ENCODE measurements at regions of chr9 and their contacts with region 1.

Region 1: DNA sequence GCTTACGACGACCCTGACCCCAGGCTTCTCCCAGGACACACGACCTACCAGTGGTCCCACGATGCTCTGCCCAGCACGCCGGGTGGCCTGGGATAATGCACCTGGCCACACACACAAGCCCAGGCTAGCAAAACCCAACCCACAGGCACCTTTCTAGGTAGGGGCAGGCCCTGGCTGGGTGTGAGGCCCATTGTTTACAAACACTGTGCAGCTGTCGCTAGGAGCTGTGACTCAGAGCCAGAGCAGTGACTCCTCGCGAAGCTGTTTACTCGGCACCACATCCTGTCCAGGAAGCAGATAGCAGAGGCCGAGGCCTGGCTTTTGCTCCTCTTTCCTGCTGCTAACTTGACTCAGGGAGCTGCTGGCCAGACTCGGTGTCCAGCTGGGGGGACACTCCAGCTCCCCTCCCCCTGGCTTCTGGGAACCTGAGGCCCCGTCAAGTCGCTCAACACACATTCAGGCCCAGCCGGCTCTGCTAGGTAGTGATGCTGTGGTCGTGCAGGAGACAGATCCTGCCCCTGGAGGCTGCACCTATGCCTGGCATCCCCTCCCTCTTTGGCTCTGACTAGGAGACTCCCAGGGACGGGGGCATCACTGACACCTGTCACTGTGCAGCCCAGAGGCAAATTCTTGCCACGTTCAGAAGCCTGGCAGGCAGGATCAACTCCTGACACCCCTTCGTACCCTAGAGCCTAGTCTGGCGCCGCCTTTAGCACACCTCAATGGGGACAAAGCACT is 12.8 kb upstream of the RALGDS start:
- DNase-seq: peak; percentile 91
- ATAC-seq: peak; percentile 98
- H3K4me3 ChIP-seq: peak overlapping the region in 1 of 3 experiments; percentile 55; a peak in 2 of 6 replicates
- H3K27ac ChIP-seq: peak overlapping the region; percentile 87
- H3K4me1 ChIP-seq: peaks cover 31% of the 10 kb centered on the region
- H3K27me3 ChIP-seq: no peaks in the 10 kb centered on the region
- CTCF ChIP-seq: peak; percentile 19; the same call in 1 of the 2 replicates
- EP300 ChIP-seq: peak; percentile 50 to 84; a peak in 3 of 4 replicates
- POLR2A ChIP-seq: peak in 1 of 2 experiments; percentile 66; a peak in 1 of 4 replicates
- RAD21 ChIP-seq: no peak

Region 2: GRCh38 chr9:132978451-132979131 is 155.3 kb before region 1 on chr9 and contains the start of gene GFI1B:
- CTCF ChIA-PET with region 1: no interaction called
- POLR2A ChIA-PET with region 1: no interaction called
- in situ Hi-C with region 1: no loop called
- intact Hi-C with region 1: no loop called
- DNase-seq: no peak
- ATAC-seq: peak; percentile 24; the same call in 2 of the 3 replicates
- H3K4me3 ChIP-seq: peak within 1 kb of the TSS in 1 of 3 experiments; percentile 42; a peak in 2 of 6 replicates
- H3K27ac ChIP-seq: no peak within 1 kb of the TSS
- H3K4me1 ChIP-seq: peaks cover 47% of the 10 kb centered on the region
- H3K27me3 ChIP-seq: peaks cover 0 to 9% of the 10 kb centered on the region in 2 experiments; a peak in 3 of 5 replicates
- CTCF ChIP-seq: no peak
- EP300 ChIP-seq: no peak
- POLR2A ChIP-seq: no peak
- RAD21 ChIP-seq: no peak
- total RNA-seq, gene GFI1B: 0.51 TPM in 1 of 2 replicates, not detected in the other

Region 3: DNA sequence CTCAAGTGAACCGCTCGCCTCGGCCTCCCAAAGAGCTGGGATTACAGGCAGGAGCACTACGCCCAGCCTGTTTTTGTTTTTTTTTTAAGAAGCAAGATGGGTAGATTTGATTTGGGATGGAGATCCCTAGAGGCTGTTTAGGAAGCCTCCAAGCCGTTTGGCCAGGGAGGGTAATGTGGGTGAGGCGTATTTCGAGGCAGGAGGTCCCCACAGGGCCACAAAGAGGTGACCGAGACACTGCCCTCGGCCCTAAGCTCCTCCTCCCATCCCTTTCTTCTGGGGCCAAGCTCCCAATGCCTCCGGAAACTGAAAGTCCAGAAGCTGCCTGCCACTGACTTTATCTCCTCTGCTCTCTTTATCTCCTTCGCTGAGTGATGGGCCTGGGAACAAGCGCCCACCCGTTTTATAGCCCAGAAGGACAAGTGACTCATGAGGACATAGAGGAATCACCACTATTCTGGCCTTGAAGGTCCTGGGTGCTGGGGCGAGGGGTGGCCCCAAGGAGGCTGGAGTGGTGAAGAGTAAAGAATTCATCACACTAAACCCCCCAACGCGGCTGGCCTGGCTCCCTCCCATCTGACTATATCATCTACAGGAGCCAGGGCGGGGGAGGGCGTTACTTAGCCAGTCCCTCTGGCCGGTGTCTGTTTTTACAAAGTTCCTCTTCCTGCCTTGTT is 10.8 kb before region 1 on chr9:
- CTCF ChIA-PET with region 1: no interaction called
- POLR2A ChIA-PET with region 1: interaction called, 5 read pairs
- in situ Hi-C with region 1: no loop called
- intact Hi-C with region 1: loop called (anchors 1 kb)
- DNase-seq: no peak
- ATAC-seq: no peak
- H3K4me3 ChIP-seq: peak overlapping the region in 2 of 3 experiments; percentile 19 to 46; a peak in 2 of 6 replicates
- H3K27ac ChIP-seq: no peak overlapping the region
- H3K4me1 ChIP-seq: peaks cover 47% of the 10 kb centered on the region
- H3K27me3 ChIP-seq: no peaks in the 10 kb centered on the region
- CTCF ChIP-seq: no peak
- EP300 ChIP-seq: no peak
- POLR2A ChIP-seq: no peak
- RAD21 ChIP-seq: no peak

Region 4: GRCh38 chr9:133144137-133144903 is 10.5 kb after region 1 on chr9:
- CTCF ChIA-PET with region 1: no interaction called
- POLR2A ChIA-PET with region 1: interaction called, 14 read pairs
- in situ Hi-C with region 1: no loop called
- intact Hi-C with region 1: no loop called
- DNase-seq: peak; percentile 81
- ATAC-seq: peak; percentile 77
- H3K4me3 ChIP-seq: peak overlapping the region; percentile 37 to 73 (median 59); a peak in 5 of 6 replicates
- H3K27ac ChIP-seq: peak overlapping the region; percentile 54
- H3K4me1 ChIP-seq: peaks cover 69% of the 10 kb centered on the region
- H3K27me3 ChIP-seq: no peaks in the 10 kb centered on the region; a peak in 1 of 5 replicates
- CTCF ChIP-seq: peak; percentile 97
- EP300 ChIP-seq: 0 out of 4 replicates have a peak, but pooled peaks of 1 of the 2 experiments have one; percentile 19
- POLR2A ChIP-seq: 0 out of 4 replicates have a peak, but pooled peaks of 1 of the 2 experiments have one; percentile 31
- RAD21 ChIP-seq: peak; percentile 99

Measured in HepG2 (cell line).